ENCODE measurements at regions of chr9 and their contacts with region 1.

Region 1: GRCh38 chr9:4604678-4605095 is 57.4 kb upstream of the PLPP6 start:
- DNase-seq: peak; percentile 71
- ATAC-seq: peak; percentile 92
- H3K4me3 Mint-ChIP-seq: no peak overlapping the region
- H3K27ac Mint-ChIP-seq: peak overlapping the region; percentile 65; the same call in 1 of the 2 replicates
- H3K4me1 Mint-ChIP-seq: peaks cover 9% of the 10 kb centered on the region
- H3K27me3 Mint-ChIP-seq: no peaks in the 10 kb centered on the region
- CTCF ChIP-seq: peak; percentile 70

Region 2: DNA sequence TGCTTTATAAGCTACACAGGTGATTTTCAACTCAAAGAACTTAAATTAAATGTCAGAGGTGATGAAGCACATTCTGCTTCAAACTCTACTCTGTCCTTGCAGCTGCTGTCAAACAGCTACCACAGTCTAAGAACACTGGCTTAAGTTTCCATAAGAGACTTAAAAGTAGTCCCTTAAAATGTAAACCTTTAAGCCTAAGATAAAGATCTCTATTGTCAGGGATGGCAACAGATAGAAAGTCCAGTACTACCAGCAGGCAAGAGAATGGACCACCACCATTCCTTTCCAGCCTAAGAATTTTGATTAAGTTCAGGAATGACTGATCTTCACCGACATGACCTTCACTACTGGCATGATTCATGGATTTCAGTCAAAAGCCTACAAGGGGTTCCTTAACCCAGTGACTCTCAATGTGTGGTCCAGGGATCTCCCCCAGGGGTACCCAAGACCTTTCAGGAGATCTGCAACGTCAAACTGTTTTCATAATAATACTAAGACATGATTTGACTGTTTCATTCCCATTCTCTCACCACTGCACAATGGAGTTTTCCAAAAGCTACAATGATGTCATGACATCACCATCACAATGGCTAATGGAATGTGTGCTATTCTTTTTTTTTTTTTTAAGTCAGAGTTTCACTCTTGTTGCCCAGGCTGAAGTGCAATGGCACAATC is 16.3 kb after region 1 on chr9:
- CTCF ChIA-PET with region 1: interaction called, 13 read pairs
- POLR2A ChIA-PET with region 1: no interaction called
- DNase-seq: no peak
- ATAC-seq: peak; percentile 55
- H3K4me3 Mint-ChIP-seq: no peak overlapping the region
- H3K27ac Mint-ChIP-seq: peak overlapping the region; percentile 92
- H3K4me1 Mint-ChIP-seq: peaks cover 41% of the 10 kb centered on the region
- H3K27me3 Mint-ChIP-seq: no peaks in the 10 kb centered on the region
- CTCF ChIP-seq: no peak

Region 3: DNA sequence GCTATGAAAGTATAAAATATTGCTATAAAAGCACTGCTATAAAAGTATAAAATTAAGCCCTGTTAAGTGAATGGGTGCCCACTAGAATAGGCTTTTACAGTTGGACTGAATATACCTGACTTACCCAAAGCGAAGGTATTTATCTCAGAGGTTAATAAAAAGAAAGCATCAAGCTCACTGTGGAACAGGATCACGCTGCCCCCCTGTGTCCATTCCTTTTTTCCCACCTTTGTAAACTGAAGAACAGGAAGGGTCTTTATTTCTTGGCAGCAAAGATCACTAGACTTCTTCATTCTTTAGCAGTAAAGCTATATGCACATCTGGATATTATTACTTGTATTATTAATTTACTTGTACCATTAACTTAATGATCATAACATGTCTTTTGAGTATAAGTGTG is 35.3 kb after region 1 on chr9:
- CTCF ChIA-PET with region 1: interaction called, 28 read pairs
- POLR2A ChIA-PET with region 1: interaction called, 3 read pairs
- DNase-seq: peak; percentile 50
- ATAC-seq: peak; percentile 60
- H3K4me3 Mint-ChIP-seq: no peak overlapping the region
- H3K27ac Mint-ChIP-seq: no peak overlapping the region
- H3K4me1 Mint-ChIP-seq: peaks cover 13% of the 10 kb centered on the region
- H3K27me3 Mint-ChIP-seq: no peaks in the 10 kb centered on the region
- CTCF ChIP-seq: peak; percentile 18; the same call in 1 of the 2 replicates

Region 4: GRCh38 chr9:4662108-4662988 is 57.7 kb after region 1 on chr9 and contains the start of gene PLPP6:
- CTCF ChIA-PET with region 1: interaction called, 13 read pairs
- POLR2A ChIA-PET with region 1: no interaction called
- DNase-seq: peak; percentile 95
- ATAC-seq: peak; percentile 93
- H3K4me3 Mint-ChIP-seq: peak within 1 kb of the TSS; percentile 82
- H3K27ac Mint-ChIP-seq: peak within 1 kb of the TSS; percentile 71
- H3K4me1 Mint-ChIP-seq: peaks cover 62% of the 10 kb centered on the region
- H3K27me3 Mint-ChIP-seq: no peaks in the 10 kb centered on the region; the same call in 1 of the 2 replicates
- CTCF ChIP-seq: no peak
- total RNA-seq, gene PLPP6: 13.4 to 13.5 TPM (median 13.5 TPM) in 3 replicates